ENCODE measurements at regions of chr6 and their contacts with region 1.

Region 1: GRCh38 chr6:30672445-30673253 is at the start of gene DHX16:
- DNase-seq: peak; percentile 98
- total RNA-seq, gene DHX16: 21.6 TPM

Region 2: DNA sequence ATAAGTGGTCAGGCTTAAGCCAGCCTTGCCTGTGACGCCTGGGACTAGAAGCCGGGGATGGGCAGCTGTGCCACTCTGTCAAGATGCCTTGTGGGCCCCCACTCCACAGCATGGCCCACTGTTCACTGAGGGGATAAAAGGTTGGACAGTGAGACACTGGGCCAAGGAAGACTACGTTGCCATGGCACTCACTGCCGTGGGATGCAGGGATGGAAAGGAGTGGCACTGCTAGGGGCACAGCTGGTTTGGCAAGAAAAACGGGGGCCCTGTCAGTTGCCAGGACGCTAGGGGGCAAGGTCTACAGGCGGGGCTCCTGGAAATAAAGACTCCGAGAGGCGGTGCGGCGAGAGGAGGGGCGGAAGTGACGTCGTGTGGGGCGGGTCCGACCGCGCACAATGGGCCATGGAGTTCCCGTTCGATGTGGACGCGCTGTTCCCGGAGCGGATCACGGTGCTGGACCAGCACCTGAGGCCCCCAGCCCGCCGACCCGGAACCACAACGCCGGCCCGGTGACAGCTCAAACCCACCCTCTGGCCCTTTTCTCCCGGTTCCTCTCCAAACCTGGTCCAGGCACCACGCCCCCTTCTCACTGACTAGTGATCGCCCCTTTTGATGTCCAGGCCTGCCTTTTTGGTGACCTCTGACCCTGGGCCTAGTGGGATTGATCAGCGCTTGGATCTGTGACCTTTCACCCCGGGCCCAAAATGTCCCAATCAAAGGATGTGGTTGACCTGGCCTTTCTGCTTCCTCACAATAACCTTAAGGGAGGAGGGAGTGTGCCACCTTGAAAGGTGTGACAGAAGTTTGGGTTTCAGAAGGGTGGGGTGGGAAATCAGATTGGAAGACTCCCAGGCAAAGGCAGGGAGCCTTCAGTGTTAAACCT is 45.9 kb before region 1 on chr6 and contains the start of gene ATAT1:
- intact Hi-C with region 1: loop called (anchors 5 kb)
- DNase-seq: peak; percentile 95
- total RNA-seq, gene ATAT1: 4.3 TPM

Region 3: GRCh38 chr6:30647242-30648116 is 25.2 kb before region 1 on chr6:
- intact Hi-C with region 1: loop called (anchors 2 kb)
- DNase-seq: peak; percentile 86

Measured in cardiac septum (tissue), 1 donor.